Caco-2 (cell line): ENCODE measurements at regions of chr14 and their contacts with region 1.

Region 1: GRCh38 chr14:74109369-74109768 is 24.6 kb downstream of the LIN52 start:
- DNase-seq: no peak
- H3K4me3 ChIP-seq: no peak overlapping the region
- H3K4me3 Mint-ChIP-seq: no peak overlapping the region
- H3K27ac Mint-ChIP-seq: no peak overlapping the region
- H3K4me1 ChIP-seq: no peaks in the 10 kb centered on the region
- H3K4me1 Mint-ChIP-seq: no peaks in the 10 kb centered on the region
- H3K27me3 ChIP-seq: no peaks in the 10 kb centered on the region
- H3K27me3 Mint-ChIP-seq: no peaks in the 10 kb centered on the region
- CTCF ChIP-seq: no peak

Region 2: GRCh38 chr14:74217672-74218448 is 108.5 kb after region 1 on chr14:
- CTCF ChIA-PET with region 1: no interaction called
- POLR2A ChIA-PET with region 1: no interaction called
- intact Hi-C with region 1: loop called (anchors 1 kb)
- DNase-seq: peak; percentile 76 to 88
- H3K4me3 ChIP-seq: peak overlapping the region; percentile 13; the same call in 1 of the 2 replicates
- H3K4me3 Mint-ChIP-seq: no peak overlapping the region
- H3K27ac Mint-ChIP-seq: no peak overlapping the region
- H3K4me1 ChIP-seq: no peaks in the 10 kb centered on the region
- H3K4me1 Mint-ChIP-seq: no peaks in the 10 kb centered on the region
- H3K27me3 ChIP-seq: peaks cover 1% of the 10 kb centered on the region; the same call in 1 of the 2 replicates
- H3K27me3 Mint-ChIP-seq: peaks cover 5% of the 10 kb centered on the region
- CTCF ChIP-seq: peak; percentile 82 to 98

Region 3: DNA sequence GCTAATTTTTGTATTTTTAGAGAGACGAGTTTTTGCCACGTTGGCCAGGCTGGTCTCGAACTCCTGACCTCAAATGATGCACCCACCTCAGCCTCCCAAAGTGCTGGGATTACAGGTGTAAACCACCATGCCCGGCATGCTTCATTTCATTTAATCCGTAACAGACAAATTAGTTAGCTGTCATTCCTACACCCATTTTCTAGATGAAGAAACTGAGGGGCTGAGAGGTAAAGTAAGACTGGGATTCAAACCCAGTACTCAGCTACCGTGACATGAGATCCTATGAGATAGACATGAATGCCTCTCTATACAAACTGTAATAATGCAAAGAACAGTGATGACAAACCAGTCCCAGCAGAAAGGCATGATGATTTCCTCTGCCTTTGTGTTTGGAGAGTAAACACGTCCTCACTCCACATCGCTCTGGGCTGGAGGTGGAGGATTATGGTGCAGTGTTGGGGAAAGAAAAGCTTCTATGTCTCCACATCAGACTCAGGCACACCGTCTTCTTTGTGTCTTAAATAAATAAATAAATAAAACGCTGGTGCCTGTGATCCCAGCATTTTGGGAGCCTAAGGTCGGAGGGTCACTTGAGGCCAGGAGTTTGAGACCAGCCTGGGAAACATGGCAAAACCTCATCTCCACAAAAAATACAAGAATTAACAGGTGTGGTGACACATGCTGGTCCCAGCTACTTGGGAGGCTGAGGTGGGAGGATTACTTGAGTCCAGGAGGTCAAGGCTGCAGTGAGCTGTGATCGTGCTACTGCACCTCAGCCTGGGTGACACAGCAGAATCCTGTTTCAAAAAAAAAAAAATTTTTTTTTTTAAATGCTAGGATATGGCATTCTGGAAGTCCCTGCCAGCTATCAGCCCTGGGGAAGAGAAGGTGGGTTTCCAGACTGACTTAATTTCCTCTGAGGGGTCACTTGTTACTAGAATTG is 140.3 kb after region 1 on chr14:
- CTCF ChIA-PET with region 1: interaction called, 4 read pairs
- POLR2A ChIA-PET with region 1: no interaction called
- intact Hi-C with region 1: loop called (anchors 1 kb)
- DNase-seq: no peak
- H3K4me3 ChIP-seq: no peak overlapping the region
- H3K4me3 Mint-ChIP-seq: no peak overlapping the region
- H3K27ac Mint-ChIP-seq: no peak overlapping the region
- H3K4me1 ChIP-seq: no peaks in the 10 kb centered on the region
- H3K4me1 Mint-ChIP-seq: peaks cover 13% of the 10 kb centered on the region
- H3K27me3 ChIP-seq: no peaks in the 10 kb centered on the region; the same call in 1 of the 2 replicates
- H3K27me3 Mint-ChIP-seq: peaks cover 8% of the 10 kb centered on the region
- CTCF ChIP-seq: no peak